ENCODE measurements at regions of chr3 and their contacts with region 1.

Region 1: GRCh38 chr3:9352917-9353752 is 9.7 kb upstream of the THUMPD3 start:
- DNase-seq: peak; percentile 71
- H3K4me3 Mint-ChIP-seq: no peak overlapping the region
- H3K27ac Mint-ChIP-seq: no peak overlapping the region
- H3K4me1 Mint-ChIP-seq: peaks cover 19% of the 10 kb centered on the region
- H3K27me3 Mint-ChIP-seq: no peaks in the 10 kb centered on the region

Region 2: DNA sequence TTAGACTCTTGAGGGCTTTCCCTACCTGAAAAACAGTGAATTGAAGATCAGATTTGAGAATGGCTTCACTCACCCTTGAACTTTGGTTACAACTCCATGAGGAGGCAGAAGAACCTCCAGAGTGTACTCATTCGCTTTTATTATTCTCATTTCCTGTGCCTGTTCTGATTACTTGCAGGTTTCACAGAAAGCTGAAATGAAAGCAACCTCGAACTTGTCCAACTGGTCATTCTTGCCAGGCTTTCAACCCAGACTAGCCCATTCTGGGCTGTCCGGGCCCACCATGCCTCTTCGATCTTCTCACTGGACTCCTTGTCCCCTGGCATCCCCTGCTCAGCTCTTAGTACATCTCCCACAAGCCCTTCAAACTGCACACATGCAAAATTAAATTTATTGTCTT is 10.4 kb before region 1 on chr3:
- CTCF ChIA-PET with region 1: interaction called, 10 read pairs
- POLR2A ChIA-PET with region 1: no interaction called
- DNase-seq: no peak
- H3K4me3 Mint-ChIP-seq: no peak overlapping the region
- H3K27ac Mint-ChIP-seq: no peak overlapping the region
- H3K4me1 Mint-ChIP-seq: no peaks in the 10 kb centered on the region
- H3K27me3 Mint-ChIP-seq: peaks cover 2% of the 10 kb centered on the region

Measured in activated CD4-positive, alpha-beta T cell treated with anti-CD3 and anti-CD28 coated beads, Interleukin-2, amount 10 ng/mL, durations not matched to agents 7 days and 5 days (primary cell).